ENCODE measurements at regions of chr9 and their contacts with region 1.

Region 1: DNA sequence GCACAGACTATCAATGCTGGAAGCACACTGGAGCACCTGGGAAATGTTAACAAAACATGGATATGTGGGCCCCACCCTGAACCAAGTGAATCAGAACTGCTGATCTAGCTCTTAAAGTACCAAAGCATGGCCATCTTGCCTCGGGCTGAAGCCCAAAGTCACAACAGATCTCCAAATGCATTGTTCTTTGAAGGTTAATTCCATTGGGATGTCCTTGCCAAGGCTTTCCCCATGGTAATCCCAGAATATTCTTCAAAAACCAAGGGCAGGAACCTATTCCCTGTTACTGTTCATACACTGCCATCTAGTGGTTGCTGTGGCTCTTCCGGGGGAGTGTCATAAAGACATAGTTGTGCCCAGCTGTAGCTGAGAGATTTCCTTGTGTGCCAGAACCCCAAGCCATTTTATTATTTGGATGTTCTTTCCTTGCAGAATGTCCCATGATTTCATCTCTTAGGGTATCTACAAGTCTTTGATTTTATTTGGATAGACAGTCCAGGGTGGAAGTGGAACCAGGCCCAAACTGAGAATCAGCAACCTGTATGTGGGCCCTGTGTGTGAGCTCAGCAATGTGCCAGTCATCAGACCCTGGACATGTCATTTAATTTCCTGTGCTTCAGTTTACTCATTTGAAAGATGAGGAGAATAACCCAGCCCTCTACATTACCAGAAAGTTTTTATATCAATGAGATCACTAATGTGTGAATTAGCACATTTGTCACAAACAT is 290.0 kb downstream of the ACTL7B start:
- DNase-seq: no peak
- H3K4me3 Mint-ChIP-seq: no peak overlapping the region
- H3K27ac Mint-ChIP-seq: no peak overlapping the region
- H3K4me1 Mint-ChIP-seq: no peaks in the 10 kb centered on the region
- H3K27me3 Mint-ChIP-seq: peaks cover 2% of the 10 kb centered on the region

Region 2: GRCh38 chr9:107421947-107422793 is 1143.6 kb before region 1 on chr9:
- intact Hi-C with region 1: loop called (anchors 2 kb)
- DNase-seq: peak; percentile 1
- H3K4me3 Mint-ChIP-seq: no peak overlapping the region
- H3K27ac Mint-ChIP-seq: no peak overlapping the region
- H3K4me1 Mint-ChIP-seq: peaks cover 4% of the 10 kb centered on the region
- H3K27me3 Mint-ChIP-seq: peaks cover 9% of the 10 kb centered on the region

Region 3: DNA sequence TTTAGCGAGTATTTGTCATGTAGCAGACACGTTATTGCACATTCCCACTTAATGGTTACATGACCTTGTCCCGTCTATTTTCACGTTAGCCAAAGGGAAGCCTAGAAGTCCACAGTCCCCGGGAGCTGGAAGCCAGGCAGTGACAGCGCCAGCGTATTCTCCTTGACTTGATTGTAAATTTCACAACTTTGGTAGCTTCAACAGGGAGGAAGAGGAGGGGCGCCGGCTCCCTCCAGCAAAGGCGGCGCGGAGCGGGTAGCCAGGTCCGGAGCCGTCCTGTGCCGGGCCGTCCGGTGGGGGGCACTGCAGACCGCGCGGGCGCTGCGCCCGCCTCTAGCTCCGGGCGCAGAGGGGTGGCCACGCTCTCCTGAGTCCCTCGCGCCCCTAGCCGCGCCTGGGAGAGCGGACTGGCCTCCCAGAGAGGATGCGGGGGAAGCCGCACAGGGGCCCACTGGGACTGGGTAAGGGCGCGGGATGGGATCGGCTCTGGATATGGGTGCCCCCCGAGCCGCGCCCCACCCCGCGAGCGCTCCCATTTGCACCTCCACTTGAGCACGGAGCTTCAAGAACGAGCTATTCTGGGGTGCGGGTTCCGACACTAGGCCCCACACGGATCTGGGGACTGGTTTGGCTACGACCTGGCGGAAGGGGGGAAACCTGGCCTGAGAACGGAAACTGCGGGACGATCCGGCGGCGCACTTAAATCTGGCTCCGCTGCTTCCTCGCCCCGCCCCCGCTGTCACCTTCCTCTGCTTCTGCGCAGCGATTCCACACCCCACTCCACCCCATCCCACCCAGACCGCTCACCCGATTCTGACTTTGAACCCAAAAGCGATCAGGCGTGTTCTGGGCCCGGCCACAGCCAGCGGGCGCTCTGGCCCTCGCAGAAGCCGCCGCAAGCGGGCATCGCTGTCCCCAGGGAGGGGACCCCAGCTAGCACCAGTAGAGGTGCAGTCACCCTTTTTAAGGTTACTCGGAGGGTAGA is 1100.1 kb before region 1 on chr9:
- intact Hi-C with region 1: loop called (anchors 5 kb)
- DNase-seq: no peak
- H3K4me3 Mint-ChIP-seq: no peak overlapping the region
- H3K27ac Mint-ChIP-seq: no peak overlapping the region
- H3K4me1 Mint-ChIP-seq: no peaks in the 10 kb centered on the region
- H3K27me3 Mint-ChIP-seq: peaks cover 28% of the 10 kb centered on the region

Region 4: DNA sequence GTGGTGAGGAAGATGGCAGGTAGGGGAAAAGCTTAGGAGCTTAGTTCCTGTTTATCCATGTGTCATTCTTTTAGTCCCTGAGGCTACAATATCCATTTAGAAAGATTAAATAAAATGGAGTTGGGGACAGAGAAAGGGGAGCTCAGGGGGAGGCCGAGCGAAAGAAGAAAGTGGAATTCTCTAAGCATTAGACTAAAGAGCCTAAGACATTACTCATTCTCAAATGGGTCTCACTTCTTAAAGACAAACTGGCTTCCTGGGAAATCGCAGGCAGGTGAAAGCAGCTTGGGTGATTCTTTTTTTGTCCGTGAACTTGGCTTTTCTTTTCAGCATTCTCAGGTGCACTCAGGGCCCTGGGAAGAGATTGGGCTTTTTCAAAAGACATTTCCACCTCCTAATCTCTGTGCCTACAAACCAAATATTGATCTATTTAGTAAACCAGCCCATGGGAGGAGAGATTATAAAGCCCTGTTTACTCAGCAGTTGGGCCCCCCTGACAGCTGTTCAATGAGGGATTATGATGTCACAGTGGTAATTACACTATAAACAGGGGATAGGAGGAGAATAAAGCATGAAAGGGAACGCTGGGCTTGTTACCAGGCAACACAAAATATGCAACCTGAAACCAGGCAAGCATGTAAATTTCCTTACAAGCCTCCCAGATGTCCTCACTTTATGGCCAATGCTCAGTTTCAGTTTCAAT is 294.0 kb before region 1 on chr9:
- intact Hi-C with region 1: no loop called
- DNase-seq: no peak
- H3K4me3 Mint-ChIP-seq: no peak overlapping the region
- H3K27ac Mint-ChIP-seq: no peak overlapping the region
- H3K4me1 Mint-ChIP-seq: no peaks in the 10 kb centered on the region
- H3K27me3 Mint-ChIP-seq: no peaks in the 10 kb centered on the region

Region 5: GRCh38 chr9:109238655-109239054 is 672.8 kb after region 1 on chr9:
- intact Hi-C with region 1: no loop called
- DNase-seq: no peak
- H3K4me3 Mint-ChIP-seq: no peak overlapping the region
- H3K27ac Mint-ChIP-seq: no peak overlapping the region
- H3K4me1 Mint-ChIP-seq: no peaks in the 10 kb centered on the region
- H3K27me3 Mint-ChIP-seq: peaks cover 22% of the 10 kb centered on the region

Measured in activated T-helper 1 cell treated with anti-CD3 and anti-CD28 coated beads, Interleukin-12 subunit alpha, Interleukin-12 subunit beta, Interleukin-2, Interleukin-4 antibody, amounts not matched to agents 30 ng/mL and 10 ng/mL and 1 ng/mL, durations not matched to agents 14 hours and 24 hours and 36 hours (primary cell).